Endothelial cell of umbilical vein (primary cell): ENCODE measurements at regions of chr14 and their contacts with region 1.

Region 1: DNA sequence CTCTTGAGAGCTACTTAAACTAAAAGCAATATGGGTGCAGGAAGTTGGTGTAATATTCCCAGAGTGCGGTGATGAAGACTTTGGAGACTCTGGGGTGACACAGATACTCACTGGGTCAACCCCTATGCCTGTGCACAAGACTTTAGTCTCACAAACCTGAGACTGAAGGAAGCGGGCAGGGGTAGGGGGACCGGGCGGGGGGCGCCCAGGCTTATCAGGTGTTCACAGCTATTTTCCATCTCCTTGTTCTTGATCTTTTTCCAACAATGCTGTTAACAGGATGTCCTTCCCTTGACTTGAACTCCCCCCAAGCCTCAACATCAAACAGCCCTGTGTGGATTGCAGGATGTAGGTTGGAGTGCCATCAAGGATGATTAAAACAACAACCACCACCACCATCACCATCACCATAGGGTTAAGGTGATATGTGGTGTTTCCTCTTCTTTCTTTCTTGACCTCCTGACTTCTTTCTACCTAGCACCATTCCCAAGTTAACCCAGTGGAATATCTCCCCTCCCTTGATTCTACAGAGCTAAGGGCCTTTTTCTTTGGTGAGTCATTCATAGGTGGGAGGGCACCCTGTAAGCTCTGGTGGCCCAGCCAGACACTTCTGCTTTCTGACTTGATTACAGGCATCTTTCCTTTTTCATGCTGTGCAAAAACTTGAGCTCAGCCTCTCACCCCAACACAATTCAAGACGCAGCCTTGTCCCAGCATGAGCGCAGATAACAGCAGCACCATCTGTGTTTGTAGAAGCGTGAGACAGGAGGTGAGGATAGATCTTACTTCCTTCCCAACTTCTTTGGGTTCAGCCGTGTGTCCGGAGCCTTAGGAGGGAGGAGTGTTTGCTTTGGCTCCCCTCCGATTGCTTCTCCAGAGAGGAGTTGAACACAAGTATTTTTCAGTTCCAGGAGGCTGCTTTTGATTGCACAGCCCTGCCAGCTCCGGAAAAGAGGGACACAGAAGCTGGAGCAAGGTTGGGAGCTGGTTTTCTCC is 26.7 kb downstream of the FLVCR2 start:
- DNase-seq: peak; percentile 92
- H3K4me3 ChIP-seq: peak overlapping the region in 1 of 3 experiments; percentile 26
- H3K27ac ChIP-seq: no peak overlapping the region
- H3K4me1 ChIP-seq: peaks cover 14% of the 10 kb centered on the region
- H3K27me3 ChIP-seq: peaks cover 15 to 20% of the 10 kb centered on the region in 2 experiments
- CTCF ChIP-seq: no peak
- POLR2A ChIP-seq: no peak

Region 2: DNA sequence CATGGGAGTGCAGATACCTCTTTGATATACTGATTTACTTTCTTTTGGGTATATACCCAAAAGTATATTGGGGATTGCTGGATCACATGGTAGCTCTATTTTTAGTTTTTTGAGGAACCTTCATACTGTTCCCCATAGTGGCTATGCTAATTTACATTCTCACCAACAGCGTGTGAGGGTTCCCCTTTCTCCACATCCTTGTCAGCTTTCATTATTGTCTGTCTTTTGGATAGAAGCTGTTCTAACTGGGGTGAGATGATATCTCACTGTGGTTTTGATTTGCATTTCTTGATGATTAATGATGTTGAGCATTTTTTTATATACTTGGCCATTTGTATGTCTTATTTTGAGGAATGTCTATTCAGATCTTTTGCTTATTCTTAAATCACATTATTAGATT is 221.4 kb before region 1 on chr14:
- CTCF ChIA-PET with region 1: no interaction called
- POLR2A ChIA-PET with region 1: no interaction called
- dilution Hi-C with region 1: no loop called
- intact Hi-C with region 1: no loop called
- DNase-seq: no peak
- H3K4me3 ChIP-seq: no peak overlapping the region
- H3K27ac ChIP-seq: no peak overlapping the region
- H3K4me1 ChIP-seq: no peaks in the 10 kb centered on the region
- H3K27me3 ChIP-seq: peaks cover 13 to 38% of the 10 kb centered on the region in 2 experiments
- CTCF ChIP-seq: no peak
- POLR2A ChIP-seq: no peak

Region 3: DNA sequence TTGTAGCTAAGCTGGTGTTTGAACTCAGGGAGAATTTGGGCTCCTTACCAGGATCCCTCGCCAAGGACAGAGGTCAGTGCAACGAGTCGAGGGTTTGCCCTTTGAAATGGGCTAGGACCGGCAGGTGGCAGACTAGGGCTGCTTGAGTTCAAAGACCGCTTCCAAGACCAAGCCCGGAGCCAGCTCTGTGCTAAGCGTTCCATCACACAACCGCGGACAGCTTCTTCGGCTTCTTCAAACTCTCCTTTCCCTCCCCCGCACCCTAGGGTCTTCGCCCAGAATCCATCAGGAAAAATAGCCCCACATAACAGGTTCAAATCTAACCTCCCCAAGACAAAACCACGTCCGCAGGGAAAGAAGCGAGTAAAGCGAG is 27.4 kb before region 1 on chr14:
- CTCF ChIA-PET with region 1: interaction called, 21 read pairs
- POLR2A ChIA-PET with region 1: no interaction called
- dilution Hi-C with region 1: no loop called
- intact Hi-C with region 1: no loop called
- DNase-seq: peak; percentile 82
- H3K4me3 ChIP-seq: peak overlapping the region; percentile 50 to 83 (median 64)
- H3K27ac ChIP-seq: no peak overlapping the region
- H3K4me1 ChIP-seq: peaks cover 18% of the 10 kb centered on the region
- H3K27me3 ChIP-seq: peaks cover 0 to 4% of the 10 kb centered on the region in 2 experiments
- CTCF ChIP-seq: peak; percentile 70 to 83
- POLR2A ChIP-seq: no peak

Region 4: DNA sequence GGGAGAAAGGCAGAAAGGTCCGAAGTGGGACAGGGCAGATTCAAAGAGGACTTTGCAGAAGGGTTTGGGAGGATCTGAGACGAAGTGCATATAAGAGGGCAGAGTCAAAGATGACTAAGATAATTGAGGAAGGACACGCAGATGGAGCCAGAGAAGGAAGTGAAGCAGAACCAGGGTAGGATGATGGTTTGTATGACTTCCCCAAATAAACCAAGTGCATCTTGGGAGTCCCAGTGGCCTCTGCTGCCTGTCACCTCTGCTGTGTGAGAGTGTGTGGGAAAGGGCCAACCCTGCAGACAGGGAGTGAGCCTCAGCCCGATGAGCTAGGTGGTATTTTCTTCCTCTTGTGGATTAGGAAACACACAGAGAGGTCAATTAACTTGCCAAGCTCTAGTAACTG is 10.0 kb after region 1 on chr14:
- CTCF ChIA-PET with region 1: interaction called, 10 read pairs
- POLR2A ChIA-PET with region 1: no interaction called
- dilution Hi-C with region 1: no loop called
- intact Hi-C with region 1: no loop called
- DNase-seq: no peak
- H3K4me3 ChIP-seq: no peak overlapping the region
- H3K27ac ChIP-seq: no peak overlapping the region
- H3K4me1 ChIP-seq: no peaks in the 10 kb centered on the region
- H3K27me3 ChIP-seq: peaks cover 5 to 13% of the 10 kb centered on the region in 2 experiments
- CTCF ChIP-seq: no peak
- POLR2A ChIP-seq: no peak

Region 5: DNA sequence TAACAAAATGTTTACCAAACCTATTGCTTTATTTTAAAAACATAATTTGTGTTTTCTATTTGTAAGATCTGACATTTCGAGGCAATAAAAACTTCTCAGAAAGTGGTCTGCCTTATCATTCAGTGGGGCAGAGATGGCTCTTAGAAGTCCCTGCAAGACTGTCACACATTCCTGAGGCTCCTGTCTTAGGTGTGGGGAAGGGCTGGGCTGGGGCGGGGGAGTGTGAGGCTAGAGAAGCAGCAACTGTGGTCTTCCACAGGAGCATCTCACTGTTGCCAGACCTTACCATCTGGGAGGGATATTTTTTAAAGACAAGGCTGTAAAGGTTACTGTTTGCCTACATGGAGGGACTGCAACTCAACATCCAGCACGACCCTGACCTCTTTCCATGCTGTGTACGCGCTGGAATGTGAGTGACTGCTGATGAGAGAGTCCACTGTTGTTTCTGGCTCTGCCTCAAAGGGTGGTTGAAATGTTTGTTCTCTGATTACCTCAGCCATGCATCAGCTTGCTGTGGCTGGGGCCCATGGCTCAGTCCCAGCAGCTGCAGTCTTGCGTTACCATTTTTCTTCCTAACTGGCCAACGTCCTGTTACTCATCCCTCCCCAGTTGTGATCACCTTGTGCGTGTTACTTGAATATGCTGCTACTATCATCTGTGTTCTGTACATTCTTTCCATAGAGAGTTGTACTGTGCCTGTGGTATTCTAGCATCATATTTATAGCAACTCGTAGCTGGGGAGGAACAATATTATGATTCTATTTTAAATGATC is 43.1 kb after region 1 on chr14:
- CTCF ChIA-PET with region 1: no interaction called
- POLR2A ChIA-PET with region 1: no interaction called
- dilution Hi-C with region 1: no loop called
- intact Hi-C with region 1: loop called (anchors 1 kb)
- DNase-seq: peak; percentile 93
- H3K4me3 ChIP-seq: no peak overlapping the region
- H3K27ac ChIP-seq: peak overlapping the region; percentile 29
- H3K4me1 ChIP-seq: peaks cover 16% of the 10 kb centered on the region
- H3K27me3 ChIP-seq: no peaks in the 10 kb centered on the region
- CTCF ChIP-seq: no peak
- POLR2A ChIP-seq: no peak

Region 6: GRCh38 chr14:75654127-75654732 is 49.1 kb after region 1 on chr14:
- CTCF ChIA-PET with region 1: interaction called, 9 read pairs
- POLR2A ChIA-PET with region 1: no interaction called
- dilution Hi-C with region 1: no loop called
- intact Hi-C with region 1: loop called (anchors 1 kb)
- DNase-seq: peak; percentile 77
- H3K4me3 ChIP-seq: no peak overlapping the region
- H3K27ac ChIP-seq: no peak overlapping the region
- H3K4me1 ChIP-seq: peaks cover 6% of the 10 kb centered on the region
- H3K27me3 ChIP-seq: no peaks in the 10 kb centered on the region
- CTCF ChIP-seq: peak; percentile 92 to 94
- POLR2A ChIP-seq: no peak